Common myeloid progenitor, CD34-positive (primary cell): ENCODE measurements at regions of chr12 and their contacts with region 1.

Region 1: GRCh38 chr12:3003357-3003992 is 44.3 kb downstream of the TEAD4 start:
- DNase-seq: no peak
- H3K4me3 ChIP-seq: no peak overlapping the region
- H3K27ac ChIP-seq: no peak overlapping the region
- H3K4me1 ChIP-seq: peaks cover 0 to 2% (median 0%) of the 10 kb centered on the region in 4 experiments
- H3K27me3 ChIP-seq: no peaks in the 10 kb centered on the region

Region 2: DNA sequence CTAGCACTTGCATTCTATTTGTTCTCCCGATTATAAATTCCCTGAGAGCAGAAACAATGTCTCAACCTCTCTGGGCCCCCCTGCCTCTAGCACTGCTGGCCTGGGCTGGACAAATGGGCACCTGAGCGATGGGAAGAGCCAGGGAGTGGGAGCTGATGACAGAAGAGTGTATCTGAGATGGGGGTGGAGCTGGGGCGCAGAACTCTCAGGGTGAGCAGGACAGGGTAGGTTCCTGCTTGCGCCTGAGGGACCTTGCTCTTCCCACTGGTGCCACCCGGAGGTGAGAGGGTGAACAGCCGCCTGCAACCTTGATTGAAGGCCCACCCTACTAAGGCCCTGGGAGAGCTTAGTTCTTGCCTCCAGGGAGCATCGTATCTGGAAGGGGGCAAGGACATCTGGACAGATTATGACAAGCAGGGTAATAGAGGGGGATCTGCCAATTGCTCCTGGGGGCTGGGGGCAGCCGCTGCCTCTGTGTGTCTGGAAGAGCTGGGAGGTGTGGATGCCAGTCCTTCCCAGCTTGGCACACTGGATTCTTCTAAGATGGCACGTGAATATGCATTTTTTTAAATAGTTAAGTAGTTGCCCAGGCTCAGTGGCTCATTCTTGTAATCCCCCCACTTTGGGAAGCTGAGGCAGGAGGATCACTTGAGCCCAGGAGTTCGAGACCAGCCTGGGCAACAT is 30.7 kb after region 1 on chr12:
- CTCF ChIA-PET with region 1: interaction called, 10 read pairs
- POLR2A ChIA-PET with region 1: no interaction called
- DNase-seq: peak; percentile 54 to 78 (median 66)
- H3K4me3 ChIP-seq: no peak overlapping the region
- H3K27ac ChIP-seq: no peak overlapping the region
- H3K4me1 ChIP-seq: no peaks in the 10 kb centered on the region
- H3K27me3 ChIP-seq: no peaks in the 10 kb centered on the region